ENCODE measurements at regions of chr6 and their contacts with region 1.

Region 1: DNA sequence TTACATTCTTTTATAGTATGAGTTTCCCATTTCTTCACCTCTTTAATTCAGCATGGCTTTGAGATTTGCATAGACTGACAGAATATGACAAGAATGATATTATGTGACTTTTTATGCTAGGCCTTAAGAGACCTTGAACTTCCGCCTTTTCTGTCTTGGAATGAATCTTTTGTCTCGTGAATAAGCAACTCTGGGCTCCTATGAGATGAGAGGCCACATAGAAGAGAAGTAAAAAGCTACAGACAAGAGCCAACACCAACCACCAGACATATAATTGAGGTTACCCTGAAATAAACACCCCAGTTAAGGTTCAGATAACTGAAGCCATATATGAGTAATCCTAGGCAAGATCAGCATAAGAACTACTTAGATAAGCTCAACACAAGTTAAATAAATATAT is 600.8 kb downstream of the MEI4 start:
- DNase-seq: no peak
- ATAC-seq: no peak

Region 2: GRCh38 chr6:78157606-78158005 is 96.0 kb before region 1 on chr6:
- intact Hi-C with region 1: no loop called
- DNase-seq: no peak
- ATAC-seq: no peak

Region 3: DNA sequence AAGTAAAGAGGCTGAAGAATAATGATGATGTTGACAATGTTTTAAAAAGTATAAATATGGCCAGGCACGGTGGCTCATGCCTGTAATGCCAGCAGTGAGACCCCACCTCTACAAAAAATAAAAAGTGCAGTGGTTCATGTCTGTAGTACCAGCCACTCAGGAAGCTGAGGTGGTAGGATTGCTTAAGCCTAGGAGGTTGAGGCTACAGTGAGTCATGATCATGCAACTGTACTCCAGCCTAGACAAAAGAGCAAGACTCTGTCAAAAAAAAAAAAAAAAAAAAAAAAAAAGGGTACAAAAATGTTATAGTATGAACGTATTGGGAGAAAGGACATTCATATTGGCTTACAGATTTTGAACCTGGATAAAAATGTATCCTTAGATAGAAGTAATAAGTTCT is 70.6 kb after region 1 on chr6:
- intact Hi-C with region 1: loop called (anchors 2 kb)
- DNase-seq: no peak
- ATAC-seq: no peak

Region 4: DNA sequence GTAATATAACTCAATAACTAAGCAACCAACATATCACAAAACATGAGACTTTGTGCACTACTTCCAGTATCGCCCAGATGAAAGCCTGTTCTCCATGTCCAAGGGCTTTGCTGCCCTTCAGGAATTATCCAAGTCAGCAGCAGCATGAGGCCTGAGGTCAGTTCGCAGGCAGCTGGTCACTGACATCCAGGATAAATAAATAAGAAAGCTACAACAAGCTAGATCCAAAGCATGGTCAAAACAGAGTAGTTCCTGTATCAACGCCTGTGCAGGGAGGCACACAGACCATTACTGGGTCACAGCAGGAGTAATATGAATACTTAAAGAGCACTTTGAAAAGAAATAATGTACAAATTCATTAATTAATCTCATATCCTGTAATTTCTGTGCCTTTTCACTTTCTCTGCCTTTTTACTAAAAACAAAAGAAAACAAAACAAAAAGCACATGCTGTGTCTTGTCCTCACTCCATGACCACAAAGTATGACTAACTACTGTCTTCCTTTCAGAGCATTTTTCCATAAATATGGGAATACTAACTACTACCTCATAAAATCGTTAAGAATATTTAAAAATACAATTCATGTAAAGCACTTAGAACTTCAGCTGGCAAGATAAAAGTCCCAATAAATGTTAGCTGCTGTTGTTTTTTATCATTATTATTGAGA is 238.9 kb after region 1 on chr6:
- intact Hi-C with region 1: no loop called
- DNase-seq: no peak
- ATAC-seq: no peak

Region 5: GRCh38 chr6:78511009-78511408 is 257.4 kb after region 1 on chr6:
- intact Hi-C with region 1: no loop called
- DNase-seq: no peak
- ATAC-seq: no peak

Measured in left ventricle myocardium superior (tissue), 1 donor.